Mammary epithelial cell (primary cell): ENCODE measurements at regions of chr13 and their contacts with region 1.

Region 1: DNA sequence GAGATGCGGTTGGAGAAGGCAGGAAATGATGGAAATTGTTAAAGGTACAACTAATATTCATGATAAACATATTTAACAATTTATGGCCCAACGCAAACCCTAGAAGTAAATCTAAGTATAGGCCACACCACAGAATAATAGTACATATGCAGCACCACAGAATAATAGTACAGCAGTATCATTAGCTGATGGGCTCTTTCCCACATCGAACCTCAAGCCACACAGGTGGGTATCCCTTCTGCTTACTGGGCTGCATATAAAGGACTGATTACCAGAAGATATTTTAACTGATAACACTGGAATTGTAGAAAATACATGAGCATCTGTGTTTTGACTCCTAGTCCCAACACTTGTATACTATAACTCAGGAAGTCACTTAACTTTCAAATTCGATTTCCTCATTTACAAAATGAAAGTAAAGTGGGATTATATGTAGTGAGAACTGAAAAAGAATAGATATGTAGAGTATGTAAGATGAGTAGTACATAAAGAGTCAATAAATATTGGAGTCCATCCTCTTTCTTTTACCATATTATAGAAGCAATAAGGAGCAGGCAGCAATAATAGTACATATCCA is 91.5 kb downstream of the TSC22D1 start:
- DNase-seq: no peak
- H3K4me3 ChIP-seq: no peak overlapping the region
- H3K27ac ChIP-seq: no peak overlapping the region
- H3K4me1 ChIP-seq: no peaks in the 10 kb centered on the region
- H3K27me3 ChIP-seq: no peaks in the 10 kb centered on the region
- CTCF ChIP-seq: no peak

Region 2: GRCh38 chr13:43720780-43721397 is 763.8 kb before region 1 on chr13:
- CTCF ChIA-PET with region 1: no interaction called
- dilution Hi-C with region 1: no loop called
- in situ Hi-C with region 1: no loop called
- intact Hi-C with region 1: no loop called
- DNase-seq: peak; percentile 36
- H3K4me3 ChIP-seq: no peak overlapping the region
- H3K27ac ChIP-seq: no peak overlapping the region
- H3K4me1 ChIP-seq: no peaks in the 10 kb centered on the region
- H3K27me3 ChIP-seq: no peaks in the 10 kb centered on the region
- CTCF ChIP-seq: no peak

Region 3: DNA sequence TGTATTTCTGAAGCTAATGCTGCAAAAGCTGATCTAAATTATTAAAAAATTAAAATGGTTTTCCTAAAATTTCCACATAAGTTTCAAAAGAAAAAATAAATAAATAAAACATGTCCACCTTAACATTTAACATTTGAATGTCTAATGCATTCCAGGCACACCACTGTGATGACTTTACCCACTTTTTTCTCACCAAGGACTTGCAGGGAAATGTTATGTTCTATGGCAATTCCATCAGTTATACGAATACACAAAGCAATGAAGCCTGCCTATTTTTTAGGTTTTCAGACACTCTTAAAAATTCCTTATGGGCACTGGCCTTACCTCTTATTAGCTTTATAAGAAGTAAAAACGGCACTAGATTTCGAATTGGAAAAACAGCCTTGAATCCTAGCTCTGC is 81.2 kb after region 1 on chr13:
- CTCF ChIA-PET with region 1: no interaction called
- dilution Hi-C with region 1: no loop called
- in situ Hi-C with region 1: no loop called
- intact Hi-C with region 1: no loop called
- DNase-seq: no peak
- H3K4me3 ChIP-seq: no peak overlapping the region
- H3K27ac ChIP-seq: no peak overlapping the region
- H3K4me1 ChIP-seq: no peaks in the 10 kb centered on the region
- H3K27me3 ChIP-seq: no peaks in the 10 kb centered on the region
- CTCF ChIP-seq: no peak

Region 4: DNA sequence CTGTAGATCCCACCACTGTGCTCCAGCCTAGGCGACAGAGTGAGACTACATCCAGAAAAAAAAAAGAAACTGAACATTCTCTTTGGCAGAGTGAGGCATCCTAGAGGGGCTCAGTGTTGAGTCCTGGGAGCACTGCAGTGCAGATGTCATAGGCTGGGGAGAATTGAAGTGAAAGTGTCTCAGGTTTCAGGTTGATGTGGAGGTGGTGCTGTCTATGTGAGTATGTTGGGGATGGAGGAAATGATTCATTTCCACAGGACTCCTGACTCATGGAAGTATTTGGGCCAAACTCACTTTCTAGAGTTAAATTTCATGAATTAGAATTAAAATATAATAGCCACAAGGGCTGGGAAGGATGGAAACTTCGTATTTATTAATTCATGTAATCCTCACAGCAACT is 225.9 kb after region 1 on chr13:
- CTCF ChIA-PET with region 1: no interaction called
- dilution Hi-C with region 1: no loop called
- in situ Hi-C with region 1: no loop called
- intact Hi-C with region 1: loop called (anchors 5 kb)
- DNase-seq: peak; percentile 91
- H3K4me3 ChIP-seq: no peak overlapping the region
- H3K27ac ChIP-seq: peak overlapping the region; percentile 94
- H3K4me1 ChIP-seq: peaks cover 54% of the 10 kb centered on the region
- H3K27me3 ChIP-seq: no peaks in the 10 kb centered on the region
- CTCF ChIP-seq: no peak

Region 5: GRCh38 chr13:44879463-44880058 is 394.9 kb after region 1 on chr13:
- CTCF ChIA-PET with region 1: interaction called, 4 read pairs
- dilution Hi-C with region 1: no loop called
- in situ Hi-C with region 1: loop called in 1 of 2 experiments (anchors 25 kb)
- intact Hi-C with region 1: loop called (anchors 1 kb)
- DNase-seq: peak; percentile 41
- H3K4me3 ChIP-seq: no peak overlapping the region
- H3K27ac ChIP-seq: no peak overlapping the region
- H3K4me1 ChIP-seq: no peaks in the 10 kb centered on the region
- H3K27me3 ChIP-seq: no peaks in the 10 kb centered on the region
- CTCF ChIP-seq: peak; percentile 56 to 65

Region 6: GRCh38 chr13:44917589-44918325 is 433.1 kb after region 1 on chr13:
- CTCF ChIA-PET with region 1: interaction called, 3 read pairs
- dilution Hi-C with region 1: no loop called
- in situ Hi-C with region 1: no loop called
- intact Hi-C with region 1: loop called (anchors 5 kb)
- DNase-seq: peak; percentile 95
- H3K4me3 ChIP-seq: peak overlapping the region; percentile 54 to 58 (median 56)
- H3K27ac ChIP-seq: peak overlapping the region; percentile 84
- H3K4me1 ChIP-seq: peaks cover 26% of the 10 kb centered on the region
- H3K27me3 ChIP-seq: no peaks in the 10 kb centered on the region
- CTCF ChIP-seq: peak in 1 of 2 donors; percentile 40

Region 7: DNA sequence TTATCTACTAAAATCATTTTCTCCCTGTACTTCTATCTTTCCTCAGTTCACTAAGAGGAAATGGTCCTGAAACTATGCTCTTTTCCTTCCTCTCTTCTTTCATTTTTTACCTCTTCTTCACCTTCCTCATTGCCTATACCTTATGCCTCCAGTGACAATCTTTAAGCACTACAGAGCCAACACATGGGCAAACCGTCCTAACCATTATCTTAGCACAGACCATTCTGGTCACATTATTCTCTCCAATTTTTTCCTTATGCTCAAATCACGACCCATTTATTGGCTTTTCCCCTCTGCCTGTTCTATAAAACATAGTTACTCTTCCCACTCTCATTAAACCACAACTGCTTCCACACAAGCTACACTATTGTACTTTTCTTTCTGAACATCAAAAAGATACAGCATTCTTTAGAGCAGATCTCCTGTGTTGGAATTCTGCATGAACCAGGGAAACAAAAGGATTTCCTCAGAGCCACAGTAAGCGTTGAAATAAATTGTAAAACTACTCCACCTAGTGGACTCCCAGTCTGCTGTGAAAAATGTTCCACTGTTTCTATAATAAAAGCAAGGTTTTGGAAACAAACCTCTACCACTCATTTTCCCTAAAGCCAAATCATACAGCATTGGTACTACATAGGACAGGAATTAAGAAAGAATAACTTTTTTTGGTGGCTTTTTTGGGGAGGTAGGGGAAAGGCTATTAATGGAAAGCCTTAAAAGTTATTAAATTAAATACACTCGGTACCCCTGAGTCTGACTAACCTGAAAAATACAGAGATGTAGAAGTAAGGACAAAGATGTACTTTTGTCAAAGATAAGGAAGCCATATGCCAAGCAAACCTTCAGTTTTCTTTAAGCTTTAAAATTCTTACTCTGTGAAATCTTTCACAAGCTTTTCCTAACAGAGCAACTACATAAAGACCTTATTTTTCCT is 485.2 kb after region 1 on chr13:
- CTCF ChIA-PET with region 1: interaction called, 4 read pairs
- dilution Hi-C with region 1: no loop called
- in situ Hi-C with region 1: loop called (anchors 10 kb)
- intact Hi-C with region 1: loop called (anchors 1 kb)
- DNase-seq: peak; percentile 28
- H3K4me3 ChIP-seq: no peak overlapping the region
- H3K27ac ChIP-seq: no peak overlapping the region
- H3K4me1 ChIP-seq: peaks cover 3% of the 10 kb centered on the region
- H3K27me3 ChIP-seq: no peaks in the 10 kb centered on the region
- CTCF ChIP-seq: peak; percentile 68 to 72

Region 8: DNA sequence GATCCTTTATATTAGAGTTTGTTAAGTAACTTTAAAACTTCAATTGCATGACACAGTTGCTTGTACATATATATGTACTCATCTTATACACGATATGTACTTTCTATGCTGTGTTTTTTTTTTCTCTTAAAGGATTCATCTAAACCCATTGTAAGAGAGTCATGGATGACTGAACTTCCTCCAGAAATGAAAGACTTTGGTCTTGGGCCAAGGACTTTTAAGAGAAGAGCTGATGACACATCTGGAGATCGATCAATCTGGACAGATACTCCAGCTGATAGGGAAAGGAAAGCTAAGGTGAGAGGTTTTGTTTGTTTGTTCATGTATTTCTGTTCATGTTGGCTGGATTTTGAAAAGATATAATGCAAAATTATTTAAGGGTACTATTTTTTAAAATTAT is 530.6 kb after region 1 on chr13:
- CTCF ChIA-PET with region 1: no interaction called
- dilution Hi-C with region 1: no loop called
- in situ Hi-C with region 1: no loop called
- intact Hi-C with region 1: no loop called
- DNase-seq: peak; percentile 4
- H3K4me3 ChIP-seq: no peak overlapping the region
- H3K27ac ChIP-seq: no peak overlapping the region
- H3K4me1 ChIP-seq: no peaks in the 10 kb centered on the region
- H3K27me3 ChIP-seq: no peaks in the 10 kb centered on the region
- CTCF ChIP-seq: no peak